ENCODE measurements at regions of chr9 and their contacts with region 1.

Region 1: DNA sequence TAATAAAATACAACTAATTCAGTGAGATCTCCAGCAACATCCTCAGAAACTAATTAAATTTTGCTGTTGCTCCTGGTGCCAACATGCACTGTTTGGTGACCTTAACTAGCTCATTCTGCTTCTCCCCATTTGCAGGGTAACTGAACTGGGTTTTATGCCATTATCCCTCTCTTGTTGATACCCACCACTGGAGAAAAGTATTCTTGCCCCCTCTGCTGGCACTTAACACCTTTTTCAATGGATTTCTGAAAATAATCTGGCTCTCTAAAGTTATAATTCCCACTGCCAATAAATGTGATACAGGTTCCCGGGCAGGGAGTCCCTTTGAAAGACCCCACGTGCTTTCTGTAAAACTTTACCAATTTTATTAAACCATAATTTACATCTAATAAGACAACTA is 394.3 kb downstream of the OSTF1 start:
- H3K4me3 ChIP-seq: no peak overlapping the region
- H3K27ac ChIP-seq: no peak overlapping the region
- H3K4me1 ChIP-seq: no peaks in the 10 kb centered on the region
- CTCF ChIP-seq: no peak

Region 2: GRCh38 chr9:75265525-75265972 is 217.0 kb before region 1 on chr9:
- CTCF ChIA-PET with region 1: interaction called, 13 read pairs
- POLR2A ChIA-PET with region 1: no interaction called
- H3K4me3 ChIP-seq: no peak overlapping the region
- H3K27ac ChIP-seq: no peak overlapping the region
- H3K4me1 ChIP-seq: no peaks in the 10 kb centered on the region
- CTCF ChIP-seq: no peak

Region 3: GRCh38 chr9:76321205-76321828 is 838.8 kb after region 1 on chr9:
- CTCF ChIA-PET with region 1: no interaction called
- POLR2A ChIA-PET with region 1: no interaction called
- H3K4me3 ChIP-seq: no peak overlapping the region
- H3K27ac ChIP-seq: no peak overlapping the region
- H3K4me1 ChIP-seq: no peaks in the 10 kb centered on the region
- CTCF ChIP-seq: no peak

Measured in HEK293 (cell line).